Activated B cell treated with CpG ODN at 0.5 μM for 24 hours (primary cell): ENCODE measurements at regions of chr20 and their contacts with region 1.

Region 1: DNA sequence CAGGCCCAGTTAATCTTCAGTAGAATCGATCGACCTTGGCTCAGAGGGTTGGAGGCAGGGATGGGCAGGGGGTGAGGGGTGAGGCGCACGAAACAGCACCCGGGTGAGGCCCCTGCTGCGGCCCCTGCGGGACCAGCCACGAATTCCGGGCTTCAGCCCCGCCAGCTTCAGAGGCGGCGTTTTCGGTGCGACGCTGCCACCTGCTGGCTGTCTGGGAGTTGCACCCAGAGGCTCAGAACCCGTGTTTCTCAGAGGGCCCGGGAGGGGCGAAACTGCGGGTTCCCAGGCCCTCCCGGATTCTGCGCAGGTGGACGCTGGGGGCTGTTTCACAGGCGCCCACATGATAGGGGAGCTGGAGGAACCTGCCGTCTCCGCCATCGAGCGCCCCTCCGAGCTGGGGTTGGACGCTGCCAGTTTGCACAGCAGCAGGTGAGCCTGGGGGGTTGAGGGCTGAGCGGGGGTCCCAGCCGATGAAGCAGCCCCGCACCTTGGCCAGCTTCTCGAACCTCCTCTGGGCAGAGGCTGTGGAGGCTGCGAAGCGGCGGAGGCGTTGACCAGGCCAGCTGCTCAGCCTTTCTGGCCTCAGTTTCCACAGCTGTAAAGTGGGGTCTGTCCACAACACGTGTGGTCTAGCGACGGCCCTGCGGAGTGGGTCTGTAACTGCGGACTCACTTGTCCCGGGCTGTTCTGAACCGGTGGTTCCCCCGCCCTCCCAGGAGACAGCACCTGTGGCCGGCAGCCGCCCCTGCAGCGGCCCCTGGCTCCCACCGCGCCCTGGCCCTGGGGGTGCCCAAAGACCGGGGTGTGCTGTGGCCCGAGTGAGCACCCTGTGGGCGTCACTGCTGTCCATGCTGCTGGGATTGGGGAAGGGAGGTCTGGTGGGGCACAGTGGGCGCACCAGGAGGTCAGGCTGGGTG is 2.5 kb upstream of the BHLHE23 start:
- DNase-seq: peak; percentile 86
- ATAC-seq: peak; percentile 86
- H3K4me3 Mint-ChIP-seq: peak overlapping the region; percentile 46
- H3K27ac Mint-ChIP-seq: no peak overlapping the region
- H3K4me1 Mint-ChIP-seq: peaks cover 26% of the 10 kb centered on the region
- H3K27me3 Mint-ChIP-seq: peaks cover 43% of the 10 kb centered on the region
- CTCF ChIP-seq: no peak

Region 2: DNA sequence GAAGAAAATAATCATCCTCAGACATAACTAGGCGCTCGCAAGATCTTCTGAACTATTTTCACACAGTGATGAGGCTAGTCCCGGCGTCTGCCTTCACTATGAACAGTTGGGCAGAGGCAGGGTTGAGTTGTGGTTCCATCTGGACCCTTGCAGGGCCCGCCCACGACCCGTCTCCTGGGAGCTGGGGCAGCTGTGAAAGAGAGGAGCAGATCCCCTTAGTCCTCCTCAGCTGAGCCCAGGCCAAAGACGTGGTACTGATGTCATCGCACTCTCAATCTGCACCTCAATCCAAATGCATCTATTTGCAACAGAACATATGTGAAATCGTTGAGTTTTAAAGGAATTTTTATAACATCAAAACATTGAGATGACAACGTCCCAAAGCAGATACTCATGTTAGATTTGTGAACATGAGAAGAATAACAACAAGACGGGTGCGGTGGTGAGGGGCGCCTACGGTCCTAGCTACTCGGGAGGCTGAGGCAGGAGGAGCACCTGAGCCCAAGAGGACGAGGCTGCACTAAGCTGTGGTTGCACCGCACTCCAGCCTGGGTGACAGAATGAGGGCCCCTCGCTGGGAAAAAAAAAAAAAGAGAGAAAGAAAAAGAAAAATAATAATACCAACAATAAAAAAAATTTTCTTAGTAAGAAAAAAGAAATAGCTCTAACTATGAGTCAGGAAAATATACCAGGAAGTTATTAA is 163.0 kb before region 1 on chr20:
- CTCF ChIA-PET with region 1: no interaction called
- POLR2A ChIA-PET with region 1: no interaction called
- intact Hi-C with region 1: no loop called
- DNase-seq: no peak
- ATAC-seq: no peak
- H3K4me3 Mint-ChIP-seq: no peak overlapping the region
- H3K27ac Mint-ChIP-seq: no peak overlapping the region
- H3K4me1 Mint-ChIP-seq: peaks cover 4% of the 10 kb centered on the region
- H3K27me3 Mint-ChIP-seq: no peaks in the 10 kb centered on the region
- CTCF ChIP-seq: no peak

Region 3: DNA sequence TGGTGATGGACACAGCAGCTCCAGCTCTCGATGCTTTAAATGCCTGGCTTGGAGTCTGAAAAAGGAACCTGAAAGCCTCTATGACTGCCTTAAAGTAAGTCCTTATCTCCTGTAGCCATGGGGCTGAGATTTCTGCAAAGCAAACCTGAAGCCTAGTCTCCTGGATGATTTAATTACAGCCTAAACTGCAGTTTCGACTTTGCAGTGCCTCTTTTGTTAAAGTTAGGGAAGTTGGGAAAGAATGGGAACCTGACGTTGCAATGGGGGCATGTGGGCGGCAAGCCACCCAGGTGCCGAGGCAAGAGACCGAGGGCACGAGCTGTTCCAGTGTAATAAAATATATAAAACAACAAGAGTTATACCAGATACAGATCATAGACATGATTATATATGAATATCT is 136.0 kb before region 1 on chr20:
- CTCF ChIA-PET with region 1: interaction called, 4 read pairs
- POLR2A ChIA-PET with region 1: no interaction called
- intact Hi-C with region 1: loop called (anchors 1 kb)
- DNase-seq: no peak
- ATAC-seq: no peak
- H3K4me3 Mint-ChIP-seq: no peak overlapping the region
- H3K27ac Mint-ChIP-seq: no peak overlapping the region
- H3K4me1 Mint-ChIP-seq: peaks cover 5% of the 10 kb centered on the region
- H3K27me3 Mint-ChIP-seq: peaks cover 4% of the 10 kb centered on the region
- CTCF ChIP-seq: no peak

Region 4: GRCh38 chr20:62900052-62900691 is 109.1 kb before region 1 on chr20:
- CTCF ChIA-PET with region 1: interaction called, 24 read pairs
- POLR2A ChIA-PET with region 1: no interaction called
- intact Hi-C with region 1: loop called (anchors 1 kb)
- DNase-seq: peak; percentile 55
- ATAC-seq: peak; percentile 98
- H3K4me3 Mint-ChIP-seq: peak overlapping the region; percentile 46
- H3K27ac Mint-ChIP-seq: peak overlapping the region; percentile 35
- H3K4me1 Mint-ChIP-seq: peaks cover 25% of the 10 kb centered on the region
- H3K27me3 Mint-ChIP-seq: no peaks in the 10 kb centered on the region
- CTCF ChIP-seq: peak; percentile 81

Region 5: GRCh38 chr20:62977613-62978560 is 31.4 kb before region 1 on chr20:
- CTCF ChIA-PET with region 1: interaction called, 11 read pairs
- POLR2A ChIA-PET with region 1: interaction called, 6 read pairs
- intact Hi-C with region 1: loop called (anchors 1 kb)
- DNase-seq: peak; percentile 84
- ATAC-seq: peak; percentile 81
- H3K4me3 Mint-ChIP-seq: peak overlapping the region; percentile 67
- H3K27ac Mint-ChIP-seq: peak overlapping the region; percentile 70
- H3K4me1 Mint-ChIP-seq: peaks cover 51% of the 10 kb centered on the region
- H3K27me3 Mint-ChIP-seq: peaks cover 23% of the 10 kb centered on the region
- CTCF ChIP-seq: no peak

Region 6: DNA sequence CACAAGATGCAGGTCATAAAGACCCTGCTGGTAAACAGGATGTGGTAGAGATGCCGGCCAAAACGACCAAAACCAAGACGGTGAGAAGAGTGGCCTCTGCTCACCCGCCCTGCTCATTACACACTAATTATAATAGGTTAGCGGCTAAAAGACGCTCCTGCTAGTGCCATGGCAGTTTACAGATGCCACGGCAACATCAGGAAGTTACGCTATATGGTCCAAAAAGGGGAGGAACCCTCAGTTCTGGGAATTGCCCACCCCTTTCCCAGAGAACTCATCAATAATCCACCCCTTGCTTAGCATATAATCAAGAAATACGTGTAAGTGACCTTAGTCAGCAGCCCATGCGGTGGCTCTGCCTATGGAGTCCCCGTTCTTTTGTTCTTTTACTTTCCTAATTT is 20.1 kb before region 1 on chr20:
- CTCF ChIA-PET with region 1: no interaction called
- POLR2A ChIA-PET with region 1: no interaction called
- intact Hi-C with region 1: no loop called
- DNase-seq: no peak
- ATAC-seq: no peak
- H3K4me3 Mint-ChIP-seq: peak overlapping the region; percentile 67
- H3K27ac Mint-ChIP-seq: no peak overlapping the region
- H3K4me1 Mint-ChIP-seq: peaks cover 8% of the 10 kb centered on the region
- H3K27me3 Mint-ChIP-seq: peaks cover 32% of the 10 kb centered on the region
- CTCF ChIP-seq: no peak